Gastrocnemius medialis (tissue), 4 donors: ENCODE measurements at regions of chr3 and their contacts with region 1.

Region 1: DNA sequence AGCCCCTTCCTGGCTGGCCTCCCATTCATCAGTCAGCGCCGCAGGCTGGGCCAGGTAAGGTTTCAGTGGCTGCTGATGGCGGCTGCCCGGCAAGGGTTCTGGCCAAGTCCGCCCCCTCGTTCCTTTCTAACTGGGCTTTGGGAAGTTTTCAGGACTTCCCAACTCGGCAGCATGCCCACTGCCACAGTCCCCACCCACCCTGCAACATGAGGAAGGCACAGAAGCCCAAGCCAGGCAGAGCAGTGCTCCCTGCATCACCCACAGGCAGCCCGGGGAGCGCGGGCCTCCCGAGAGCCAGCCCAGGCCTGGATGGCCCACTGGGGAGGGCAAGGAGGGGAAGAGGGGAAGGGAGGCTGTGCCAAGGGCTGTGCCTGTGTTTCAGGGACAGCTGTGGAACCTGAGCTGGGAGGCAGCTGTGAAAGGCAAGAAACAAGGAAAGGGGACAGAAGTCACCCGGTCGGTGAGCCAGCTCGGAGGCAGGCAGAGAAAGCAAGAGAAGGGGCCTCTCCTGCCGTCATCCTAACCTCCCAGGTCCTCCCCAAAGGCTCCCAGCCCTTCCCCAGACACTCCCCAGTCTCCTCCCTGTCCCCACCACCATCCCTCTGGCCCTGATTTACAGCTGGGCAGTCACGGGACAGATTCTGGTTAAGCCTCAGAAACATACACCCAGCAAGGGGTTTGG is 73.9 kb downstream of the CPN2 start:
- DNase-seq: peak; percentile 72 to 88
- ATAC-seq: peak; percentile 80 to 81
- H3K4me3 ChIP-seq: peak overlapping the region in 1 of 4 donors; percentile 0
- H3K27ac ChIP-seq: peak overlapping the region; percentile 78 to 88 (median 82)
- H3K4me1 ChIP-seq: peaks cover 30 to 35% of the 10 kb centered on the region in 2 donors
- H3K27me3 ChIP-seq: no peaks in the 10 kb centered on the region
- CTCF ChIP-seq: no peak
- POLR2A ChIP-seq: peak; percentile 44 to 47

Region 2: DNA sequence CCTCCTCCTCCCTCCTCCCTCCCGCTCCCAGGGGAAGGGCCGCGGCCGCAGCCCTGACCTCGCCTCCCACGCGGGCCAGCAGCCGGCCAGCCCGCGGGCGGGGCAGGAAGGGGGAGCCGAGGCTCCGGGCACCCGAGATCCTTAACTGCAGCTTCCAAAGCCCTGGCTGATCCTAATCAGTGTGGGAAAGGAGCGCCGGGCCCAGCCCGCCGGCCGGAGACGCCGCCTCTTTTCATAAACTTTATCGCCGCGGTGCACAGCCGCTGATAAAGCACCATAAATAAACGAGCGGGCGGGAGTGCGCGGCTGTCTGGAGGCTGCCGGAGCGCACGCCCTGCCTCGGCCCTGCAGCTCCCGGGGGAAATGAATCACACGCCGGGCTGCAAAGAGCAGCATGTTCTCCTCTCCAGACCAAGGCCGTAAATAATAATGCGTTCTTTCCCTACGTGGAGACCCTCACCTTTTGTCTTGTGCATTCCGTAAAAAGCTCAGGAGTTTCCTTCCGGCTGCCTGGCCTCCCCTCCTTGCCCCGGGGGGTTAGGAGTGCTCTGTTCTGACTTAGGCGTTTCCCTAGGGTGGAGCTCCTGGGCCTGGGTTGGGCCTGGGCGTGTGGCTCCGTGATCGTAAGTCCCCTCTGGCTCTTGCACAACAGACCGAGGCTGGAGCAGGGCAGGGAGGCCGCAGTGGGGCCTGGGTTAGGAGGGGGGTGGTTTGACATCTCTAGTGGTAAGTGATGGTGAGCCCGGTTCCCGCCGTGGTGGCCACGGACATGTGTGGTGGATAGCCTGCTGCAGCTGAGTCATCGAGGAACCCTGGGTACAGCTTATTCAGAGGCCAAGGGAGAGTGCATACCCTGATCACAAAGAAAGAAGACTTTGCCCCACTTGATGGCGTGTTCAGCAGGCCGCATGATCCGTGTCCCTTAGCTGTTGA is 273.9 kb before region 1 on chr3:
- in situ Hi-C with region 1: no loop called
- intact Hi-C with region 1: loop called (anchors 2 kb)
- DNase-seq: peak; percentile 74 to 85
- ATAC-seq: peak; percentile 74 to 82
- H3K4me3 ChIP-seq: peak overlapping the region; percentile 43 to 54 (median 52)
- H3K27ac ChIP-seq: peak overlapping the region; percentile 85 to 90 (median 86)
- H3K4me1 ChIP-seq: peaks cover 32 to 41% of the 10 kb centered on the region in 2 donors
- H3K27me3 ChIP-seq: no peaks in the 10 kb centered on the region
- CTCF ChIP-seq: no peak
- POLR2A ChIP-seq: peak; percentile 13 to 27

Region 3: GRCh38 chr3:194064380-194065332 is 212.6 kb before region 1 on chr3:
- in situ Hi-C with region 1: no loop called
- intact Hi-C with region 1: loop called (anchors 2 kb)
- DNase-seq: peak; percentile 62 to 84
- ATAC-seq: peak; percentile 94 to 97
- H3K4me3 ChIP-seq: no peak overlapping the region
- H3K27ac ChIP-seq: peak overlapping the region; percentile 77 to 84 (median 79)
- H3K4me1 ChIP-seq: peaks cover 19 to 26% of the 10 kb centered on the region in 2 donors
- H3K27me3 ChIP-seq: no peaks in the 10 kb centered on the region
- CTCF ChIP-seq: peak in 3 of 5 experiments; percentile 27 to 42 (median 29)
- POLR2A ChIP-seq: no peak

Region 4: DNA sequence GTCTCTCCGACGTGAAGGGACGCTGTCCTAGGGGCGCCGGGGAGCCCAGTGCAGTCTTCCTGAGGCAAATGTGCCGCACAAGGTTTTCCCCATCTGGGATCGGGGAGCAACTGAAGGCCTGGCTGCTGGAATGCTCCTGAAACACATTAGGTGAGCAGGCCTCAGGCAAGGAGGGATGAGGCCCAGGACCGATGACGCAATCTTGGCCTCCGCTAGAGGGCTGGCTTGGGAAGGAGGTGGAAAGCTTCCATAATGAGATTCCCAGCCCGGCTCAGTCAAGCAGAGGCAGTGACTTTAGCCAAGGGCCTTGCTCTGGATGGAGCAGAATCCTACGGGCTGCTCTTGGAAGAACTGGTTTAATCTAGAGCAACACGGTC is 23.1 kb after region 1 on chr3:
- in situ Hi-C with region 1: no loop called
- intact Hi-C with region 1: loop called (anchors 2 kb)
- DNase-seq: peak; percentile 79 to 86
- ATAC-seq: peak; percentile 98 to 99
- H3K4me3 ChIP-seq: no peak overlapping the region
- H3K27ac ChIP-seq: peak overlapping the region; percentile 48 to 60 (median 54)
- H3K4me1 ChIP-seq: peaks cover 6 to 11% of the 10 kb centered on the region in 2 donors
- H3K27me3 ChIP-seq: no peaks in the 10 kb centered on the region
- CTCF ChIP-seq: peak in 2 of 5 experiments; percentile 22 to 32
- POLR2A ChIP-seq: no peak

Region 5: GRCh38 chr3:194323785-194324735 is 46.8 kb after region 1 on chr3:
- in situ Hi-C with region 1: no loop called
- intact Hi-C with region 1: loop called (anchors 2 kb)
- DNase-seq: peak; percentile 89 to 94
- ATAC-seq: peak; percentile 86 to 89
- H3K4me3 ChIP-seq: peak overlapping the region; percentile 33 to 51 (median 48)
- H3K27ac ChIP-seq: peak overlapping the region; percentile 85 to 92 (median 88)
- H3K4me1 ChIP-seq: peaks cover 7 to 10% of the 10 kb centered on the region in 2 donors
- H3K27me3 ChIP-seq: peaks cover 0 to 10% (median 0%) of the 10 kb centered on the region in 3 donors
- CTCF ChIP-seq: no peak
- POLR2A ChIP-seq: peak; percentile 24 to 33

Region 6: DNA sequence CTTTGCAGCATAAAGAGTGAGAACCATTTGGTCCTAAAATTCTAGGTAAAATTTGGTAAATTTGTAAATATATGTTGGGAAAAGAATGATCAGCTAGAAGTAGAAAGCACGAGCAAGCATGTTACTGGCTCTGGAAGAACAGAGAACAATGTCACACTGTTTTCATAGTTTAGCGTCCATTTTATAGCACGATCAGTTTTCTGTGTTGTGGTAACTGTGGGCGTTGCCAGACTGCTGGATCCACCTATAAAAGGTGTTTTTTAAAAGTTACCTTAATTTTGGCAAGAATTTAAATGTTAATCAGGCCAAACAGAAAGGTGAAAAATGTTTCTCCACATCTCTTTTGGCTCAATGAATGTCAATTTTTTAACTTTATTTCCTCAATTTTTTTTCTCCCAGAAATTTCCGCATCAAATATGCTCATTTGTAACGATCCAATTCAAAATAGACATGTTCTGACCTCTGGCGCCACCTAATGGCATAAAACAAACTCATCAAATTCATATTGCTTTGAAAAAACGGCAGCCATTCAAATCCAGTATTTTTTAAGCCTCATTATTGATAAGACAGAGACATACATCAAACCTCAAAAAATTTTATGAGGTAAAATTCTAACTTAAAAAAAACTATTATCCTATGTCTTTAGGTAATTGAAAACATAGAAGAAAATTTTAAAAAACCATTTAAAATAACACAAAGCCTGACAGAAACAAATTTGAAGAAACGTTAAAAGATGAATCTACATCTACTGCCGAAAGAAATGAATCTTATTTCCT is 127.3 kb after region 1 on chr3:
- in situ Hi-C with region 1: no loop called
- intact Hi-C with region 1: no loop called
- DNase-seq: no peak
- ATAC-seq: no peak
- H3K4me3 ChIP-seq: no peak overlapping the region
- H3K27ac ChIP-seq: no peak overlapping the region
- H3K4me1 ChIP-seq: no peaks in the 10 kb centered on the region
- H3K27me3 ChIP-seq: peaks cover 0 to 6% (median 5%) of the 10 kb centered on the region in 3 donors
- CTCF ChIP-seq: peak; percentile 31 to 68 (median 47)
- POLR2A ChIP-seq: no peak

Region 7: DNA sequence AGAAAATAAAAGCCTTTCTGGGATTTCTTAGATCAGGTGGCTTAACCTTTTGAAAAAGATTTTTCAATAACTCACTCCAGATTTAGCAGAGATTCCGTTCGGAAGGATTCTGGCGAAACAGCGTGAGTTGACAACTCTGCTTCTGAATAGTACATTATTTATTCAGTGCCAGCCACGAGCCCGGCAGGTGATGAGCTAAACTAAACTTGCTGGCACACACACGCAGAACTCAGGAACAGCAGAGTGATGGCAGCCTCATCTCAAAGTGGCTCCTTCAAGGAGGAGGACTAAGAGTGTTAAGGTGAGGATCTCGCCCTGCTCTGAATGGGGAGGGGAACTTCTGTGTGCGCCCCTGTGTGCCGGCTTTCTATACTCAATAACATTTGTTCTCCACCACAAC is 522.8 kb after region 1 on chr3:
- in situ Hi-C with region 1: no loop called
- intact Hi-C with region 1: no loop called
- DNase-seq: peak in 1 of 2 donors; percentile 28
- ATAC-seq: peak; percentile 66 to 82
- H3K4me3 ChIP-seq: no peak overlapping the region
- H3K27ac ChIP-seq: no peak overlapping the region
- H3K4me1 ChIP-seq: no peaks in the 10 kb centered on the region
- H3K27me3 ChIP-seq: no peaks in the 10 kb centered on the region
- CTCF ChIP-seq: no peak
- POLR2A ChIP-seq: no peak